SK-N-SH (cell line): ENCODE measurements at regions of chr9 and their contacts with region 1.

Region 1: GRCh38 chr9:124708633-124709291 is 62.3 kb downstream of the NR6A1 start:
- DNase-seq: peak; percentile 5
- H3K4me3 ChIP-seq: no peak overlapping the region
- H3K27ac ChIP-seq: peak overlapping the region; percentile 67 to 88
- H3K4me1 ChIP-seq: peaks cover 16 to 38% of the 10 kb centered on the region in 2 experiments; a peak in 2 of 4 replicates
- H3K27me3 ChIP-seq: no peaks in the 10 kb centered on the region
- CTCF ChIP-seq: no peak
- EP300 ChIP-seq: peak in 1 of 2 experiments; percentile 81; a peak in 2 of 4 replicates
- RAD21 ChIP-seq: no peak

Region 2: GRCh38 chr9:124285903-124286291 is 422.9 kb before region 1 on chr9:
- CTCF ChIA-PET with region 1: no interaction called
- POLR2A ChIA-PET with region 1: no interaction called
- DNase-seq: no peak
- H3K4me3 ChIP-seq: no peak overlapping the region
- H3K27ac ChIP-seq: peak overlapping the region in 1 of 2 experiments; percentile 27; a peak in 1 of 4 replicates
- H3K4me1 ChIP-seq: 0 out of 4 replicates have a peak, but pooled peaks cover 0 to 6% of the 10 kb centered on the region in 2 experiments
- H3K27me3 ChIP-seq: no peaks in the 10 kb centered on the region
- CTCF ChIP-seq: no peak
- EP300 ChIP-seq: no peak
- RAD21 ChIP-seq: no peak

Region 3: DNA sequence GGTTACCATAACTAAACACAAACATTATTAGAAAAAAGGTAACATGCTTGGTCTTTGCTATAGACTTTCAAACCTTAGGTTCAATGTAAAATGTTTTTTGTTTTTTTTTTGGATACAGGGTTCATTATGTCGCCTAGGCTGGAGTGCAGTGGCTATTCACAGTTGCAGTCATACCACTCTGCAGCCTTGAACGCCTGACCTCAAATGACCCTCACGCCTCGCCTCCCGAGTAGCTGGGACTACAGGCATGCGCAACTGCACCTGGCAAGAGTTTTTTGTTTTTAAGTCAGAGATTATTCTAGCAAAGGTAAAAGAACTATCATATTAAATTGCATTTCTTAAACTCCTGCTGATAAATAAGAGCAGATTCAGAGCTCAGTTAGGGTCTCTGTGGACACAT is 146.4 kb before region 1 on chr9:
- CTCF ChIA-PET with region 1: interaction called, 11 read pairs
- POLR2A ChIA-PET with region 1: no interaction called
- DNase-seq: no peak
- H3K4me3 ChIP-seq: no peak overlapping the region
- H3K27ac ChIP-seq: no peak overlapping the region
- H3K4me1 ChIP-seq: no peaks in the 10 kb centered on the region
- H3K27me3 ChIP-seq: no peaks in the 10 kb centered on the region
- CTCF ChIP-seq: no peak
- EP300 ChIP-seq: no peak
- RAD21 ChIP-seq: no peak

Region 4: DNA sequence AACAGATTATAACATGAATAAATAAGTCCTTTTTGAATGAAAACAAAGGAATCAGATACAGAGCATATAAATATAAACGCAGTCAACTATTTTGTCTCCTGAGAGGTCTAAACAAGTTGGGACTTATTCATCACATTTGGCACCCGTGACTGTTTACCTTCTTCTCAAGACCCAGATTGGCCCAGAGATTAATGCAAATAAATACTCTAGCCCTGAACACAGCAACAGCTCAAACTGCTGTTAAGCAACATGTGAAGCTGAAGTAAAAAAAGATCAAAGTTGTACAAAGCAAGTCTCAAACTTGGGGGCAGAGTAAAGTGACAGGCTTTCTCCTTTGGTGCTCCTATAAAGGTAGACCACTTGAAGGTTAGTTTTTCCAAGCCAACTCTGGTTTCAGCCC is 106.6 kb before region 1 on chr9:
- CTCF ChIA-PET with region 1: interaction called, 20 read pairs
- POLR2A ChIA-PET with region 1: no interaction called
- DNase-seq: no peak
- H3K4me3 ChIP-seq: no peak overlapping the region
- H3K27ac ChIP-seq: no peak overlapping the region
- H3K4me1 ChIP-seq: no peaks in the 10 kb centered on the region
- H3K27me3 ChIP-seq: no peaks in the 10 kb centered on the region
- CTCF ChIP-seq: no peak
- EP300 ChIP-seq: no peak
- RAD21 ChIP-seq: no peak

Region 5: DNA sequence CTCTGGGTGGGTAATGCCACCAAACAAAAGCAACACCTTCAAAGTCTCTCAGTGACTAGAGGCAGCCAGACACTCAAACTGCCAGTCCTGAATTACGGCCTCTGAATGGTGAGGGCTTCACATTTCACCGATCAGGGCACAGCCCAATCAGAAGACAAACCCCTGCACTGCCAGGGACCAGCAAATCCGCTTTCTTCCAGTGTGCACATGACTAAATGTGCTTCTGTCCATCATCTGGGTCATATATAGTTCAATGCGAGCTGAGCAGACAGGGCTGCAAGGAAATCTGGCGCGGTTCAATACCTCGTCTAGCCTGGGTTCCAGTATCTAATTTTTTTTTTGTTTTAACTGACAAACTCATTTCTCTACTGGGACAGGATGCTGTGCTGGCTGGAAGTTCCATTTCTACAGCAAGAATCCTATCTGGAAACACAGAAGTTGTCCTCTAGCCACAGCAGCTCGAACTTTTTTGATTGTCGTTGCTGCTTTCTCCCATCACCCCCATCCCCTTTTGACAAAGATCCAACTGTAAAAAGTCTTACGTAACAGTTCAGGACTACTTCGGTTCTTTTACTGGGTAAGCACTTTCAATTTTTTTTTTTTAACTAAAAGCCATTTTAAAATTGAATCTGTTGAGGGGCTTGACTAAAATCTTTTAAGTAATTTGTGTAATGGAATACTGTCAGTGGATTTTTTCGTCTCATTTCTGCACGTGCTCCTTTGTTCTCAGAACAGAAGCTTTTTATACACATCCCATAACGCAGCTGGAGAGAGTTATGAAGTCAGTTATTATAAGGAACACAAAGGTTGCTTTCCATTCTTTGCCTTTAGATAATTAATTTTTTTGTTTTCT is 50.4 kb before region 1 on chr9:
- CTCF ChIA-PET with region 1: interaction called, 83 read pairs
- POLR2A ChIA-PET with region 1: interaction called, 3 read pairs
- DNase-seq: peak; percentile 76
- H3K4me3 ChIP-seq: peak overlapping the region; percentile 83 to 85
- H3K27ac ChIP-seq: peak overlapping the region; percentile 97 to 100
- H3K4me1 ChIP-seq: peaks cover 30% of the 10 kb centered on the region in 2 experiments; a peak in 3 of 4 replicates
- H3K27me3 ChIP-seq: no peaks in the 10 kb centered on the region
- CTCF ChIP-seq: no peak
- EP300 ChIP-seq: no peak
- RAD21 ChIP-seq: no peak

Region 6: GRCh38 chr9:124735121-124735520 is 26.4 kb after region 1 on chr9:
- CTCF ChIA-PET with region 1: interaction called, 19 read pairs
- POLR2A ChIA-PET with region 1: no interaction called
- DNase-seq: no peak
- H3K4me3 ChIP-seq: no peak overlapping the region
- H3K27ac ChIP-seq: peak overlapping the region; percentile 34 to 65; a peak in 3 of 4 replicates
- H3K4me1 ChIP-seq: peaks cover 0 to 19% of the 10 kb centered on the region in 2 experiments; a peak in 1 of 4 replicates
- H3K27me3 ChIP-seq: no peaks in the 10 kb centered on the region
- CTCF ChIP-seq: no peak
- EP300 ChIP-seq: 0 out of 4 replicates have a peak, but pooled peaks of 1 of the 2 experiments have one; percentile 38
- RAD21 ChIP-seq: no peak

Region 7: GRCh38 chr9:124764774-124765438 is 56.1 kb after region 1 on chr9:
- CTCF ChIA-PET with region 1: interaction called, 23 read pairs
- POLR2A ChIA-PET with region 1: no interaction called
- DNase-seq: no peak
- H3K4me3 ChIP-seq: no peak overlapping the region
- H3K27ac ChIP-seq: no peak overlapping the region
- H3K4me1 ChIP-seq: peaks cover 8 to 16% of the 10 kb centered on the region in 2 experiments; a peak in 3 of 4 replicates
- H3K27me3 ChIP-seq: no peaks in the 10 kb centered on the region
- CTCF ChIP-seq: peak; percentile 56
- EP300 ChIP-seq: no peak
- RAD21 ChIP-seq: peak; percentile 65